A549 (cell line): ENCODE measurements at regions of chr3 and their contacts with region 1.

Region 1: DNA sequence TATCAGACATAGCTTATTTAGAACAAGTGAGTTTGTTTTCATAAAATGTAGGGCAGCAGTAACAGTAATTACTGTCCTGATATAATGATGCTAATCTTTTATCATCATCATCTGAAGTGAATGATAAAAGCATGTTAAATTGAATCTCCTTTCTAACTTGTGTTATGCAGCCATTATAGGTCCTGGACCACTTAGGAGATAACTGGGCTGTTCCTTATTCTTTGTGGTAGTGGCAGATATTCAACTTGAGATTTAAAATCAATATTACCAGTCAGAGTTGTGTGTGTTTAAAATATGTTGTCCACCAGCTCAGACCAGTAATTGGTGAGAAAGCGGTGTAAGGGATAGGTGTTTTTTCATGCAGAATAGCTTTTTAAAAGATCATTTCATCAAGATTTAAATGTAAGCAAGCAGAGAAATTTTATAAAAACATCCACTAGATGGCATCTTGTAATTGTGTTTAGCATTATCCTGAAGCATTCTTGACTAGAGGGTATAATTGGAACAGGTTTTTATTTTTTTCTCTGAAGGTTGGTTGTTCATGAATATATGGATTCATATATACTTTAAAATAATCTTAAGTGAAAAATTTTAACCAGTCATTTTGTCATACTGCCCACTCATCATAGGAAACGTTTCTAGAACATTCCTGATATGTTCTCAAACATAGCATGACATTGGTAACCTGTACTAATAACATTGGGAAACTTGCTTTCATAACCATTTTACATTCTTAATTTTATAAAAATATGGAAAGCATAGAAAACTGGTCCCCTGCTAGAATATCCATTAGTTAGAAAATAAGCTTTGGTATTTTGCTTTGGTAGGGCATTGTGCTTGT is 153.9 kb downstream of the BBX start:
- DNase-seq: peak in 1 of 2 experiments; percentile 16
- ATAC-seq: peak; percentile 54 to 78; a peak in 5 of 6 replicates
- H3K4me3 ChIP-seq: no peak overlapping the region
- H3K27ac ChIP-seq: no peak overlapping the region
- H3K4me1 ChIP-seq: no peaks in the 10 kb centered on the region
- CTCF ChIP-seq: peak; percentile 69
- EP300 ChIP-seq: no peak
- POLR2A ChIP-seq: no peak
- RAD21 ChIP-seq: peak; percentile 54 to 65; a peak in 4 of 5 replicates

Region 2: GRCh38 chr3:107660306-107660976 is 16.2 kb before region 1 on chr3:
- CTCF ChIA-PET with region 1: interaction called, 48 read pairs
- POLR2A ChIA-PET with region 1: no interaction called
- DNase-seq: peak in 1 of 2 experiments; percentile 50
- ATAC-seq: no peak
- H3K4me3 ChIP-seq: no peak overlapping the region
- H3K27ac ChIP-seq: no peak overlapping the region
- H3K4me1 ChIP-seq: peaks cover 11% of the 10 kb centered on the region
- CTCF ChIP-seq: peak; percentile 73
- EP300 ChIP-seq: no peak
- POLR2A ChIP-seq: no peak
- RAD21 ChIP-seq: peak; percentile 36 to 46

Region 3: DNA sequence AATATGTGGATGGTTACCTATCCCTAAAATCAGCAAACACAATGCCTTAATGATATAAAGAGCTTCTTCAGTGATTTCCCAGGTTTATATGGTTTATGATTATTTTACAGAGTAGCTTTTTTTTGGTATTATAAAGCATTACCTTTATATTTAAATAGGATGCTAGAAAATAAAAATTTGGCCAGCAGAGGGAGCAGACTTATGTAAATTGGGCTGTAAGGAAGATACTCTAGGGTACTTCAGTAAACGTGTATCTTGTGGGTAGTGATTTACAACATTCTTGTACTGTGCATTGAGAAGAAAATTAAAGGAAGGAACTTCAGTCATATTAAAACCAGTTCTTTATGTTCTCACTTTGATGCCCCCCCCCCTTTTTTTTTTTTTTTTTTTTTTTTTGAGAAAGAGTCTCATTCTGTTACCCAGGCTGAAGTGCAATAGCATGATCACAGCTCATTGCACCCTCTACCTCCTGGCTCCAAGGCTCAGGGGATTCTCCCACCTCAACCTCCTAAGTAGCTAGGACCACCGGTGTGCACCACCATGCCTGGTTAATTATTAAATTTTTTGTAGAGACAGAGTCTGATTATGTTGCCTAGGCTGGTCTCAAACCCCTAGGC is 13.9 kb after region 1 on chr3:
- CTCF ChIA-PET with region 1: interaction called, 21 read pairs
- POLR2A ChIA-PET with region 1: no interaction called
- DNase-seq: peak; percentile 30 to 67
- ATAC-seq: peak; percentile 73 to 83; a peak in 5 of 6 replicates
- H3K4me3 ChIP-seq: no peak overlapping the region
- H3K27ac ChIP-seq: no peak overlapping the region
- H3K4me1 ChIP-seq: peaks cover 14% of the 10 kb centered on the region; the same call in 2 of the 3 replicates
- CTCF ChIP-seq: peak; percentile 60
- EP300 ChIP-seq: no peak
- POLR2A ChIP-seq: no peak
- RAD21 ChIP-seq: peak in 1 of 2 experiments; percentile 34; a peak in 2 of 5 replicates

Region 4: GRCh38 chr3:107727102-107727501 is 50.4 kb after region 1 on chr3:
- CTCF ChIA-PET with region 1: interaction called, 13 read pairs
- POLR2A ChIA-PET with region 1: no interaction called
- DNase-seq: no peak
- ATAC-seq: no peak
- H3K4me3 ChIP-seq: no peak overlapping the region
- H3K27ac ChIP-seq: no peak overlapping the region
- H3K4me1 ChIP-seq: no peaks in the 10 kb centered on the region
- CTCF ChIP-seq: no peak
- EP300 ChIP-seq: no peak
- POLR2A ChIP-seq: no peak
- RAD21 ChIP-seq: no peak

Region 5: DNA sequence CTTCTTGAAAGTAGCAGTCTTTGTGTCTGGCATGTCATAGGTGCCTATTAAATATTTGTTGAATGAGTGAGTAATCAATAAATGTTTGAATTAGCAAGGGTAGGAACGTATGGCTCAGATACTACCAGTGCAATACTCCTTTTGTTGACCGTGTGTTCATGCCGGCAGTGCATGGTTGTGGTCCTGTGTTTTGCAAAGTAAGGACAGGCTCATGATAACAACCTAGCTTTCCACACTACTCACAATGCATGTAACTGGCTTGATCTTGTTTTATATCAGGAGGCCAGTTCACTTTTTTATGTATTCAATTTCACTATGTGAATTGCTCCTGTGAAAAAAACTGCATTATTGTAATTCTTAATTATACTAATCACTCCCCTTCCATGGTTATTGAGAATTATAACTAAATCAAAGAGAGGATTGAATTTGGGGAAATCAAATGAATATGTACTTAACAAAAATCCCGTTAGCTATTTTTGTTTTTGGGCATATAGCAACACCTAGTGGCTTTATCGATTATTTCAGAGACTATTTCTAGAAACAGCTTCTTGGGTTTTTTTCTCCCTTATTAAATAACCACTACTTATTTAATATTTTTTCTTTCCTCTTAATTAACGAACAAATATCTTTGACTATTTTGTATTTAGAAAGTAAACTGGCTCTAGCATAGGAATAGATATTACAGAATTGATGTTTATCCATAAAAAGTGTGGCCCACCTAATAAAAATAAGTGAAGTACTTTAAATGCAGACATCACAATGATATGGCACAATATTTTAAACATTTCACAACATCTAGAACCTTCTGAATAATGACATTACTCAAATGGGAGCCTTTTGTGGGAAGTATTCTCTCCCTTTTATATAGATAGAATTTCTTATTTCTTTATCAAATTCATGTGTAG is 64.6 kb after region 1 on chr3:
- CTCF ChIA-PET with region 1: interaction called, 47 read pairs
- POLR2A ChIA-PET with region 1: no interaction called
- DNase-seq: peak in 1 of 2 experiments; percentile 23
- ATAC-seq: no peak; a peak in 1 of 6 replicates
- H3K4me3 ChIP-seq: no peak overlapping the region
- H3K27ac ChIP-seq: no peak overlapping the region
- H3K4me1 ChIP-seq: no peaks in the 10 kb centered on the region
- CTCF ChIP-seq: peak; percentile 73
- EP300 ChIP-seq: no peak
- POLR2A ChIP-seq: no peak
- RAD21 ChIP-seq: peak; percentile 64 to 76

Region 6: DNA sequence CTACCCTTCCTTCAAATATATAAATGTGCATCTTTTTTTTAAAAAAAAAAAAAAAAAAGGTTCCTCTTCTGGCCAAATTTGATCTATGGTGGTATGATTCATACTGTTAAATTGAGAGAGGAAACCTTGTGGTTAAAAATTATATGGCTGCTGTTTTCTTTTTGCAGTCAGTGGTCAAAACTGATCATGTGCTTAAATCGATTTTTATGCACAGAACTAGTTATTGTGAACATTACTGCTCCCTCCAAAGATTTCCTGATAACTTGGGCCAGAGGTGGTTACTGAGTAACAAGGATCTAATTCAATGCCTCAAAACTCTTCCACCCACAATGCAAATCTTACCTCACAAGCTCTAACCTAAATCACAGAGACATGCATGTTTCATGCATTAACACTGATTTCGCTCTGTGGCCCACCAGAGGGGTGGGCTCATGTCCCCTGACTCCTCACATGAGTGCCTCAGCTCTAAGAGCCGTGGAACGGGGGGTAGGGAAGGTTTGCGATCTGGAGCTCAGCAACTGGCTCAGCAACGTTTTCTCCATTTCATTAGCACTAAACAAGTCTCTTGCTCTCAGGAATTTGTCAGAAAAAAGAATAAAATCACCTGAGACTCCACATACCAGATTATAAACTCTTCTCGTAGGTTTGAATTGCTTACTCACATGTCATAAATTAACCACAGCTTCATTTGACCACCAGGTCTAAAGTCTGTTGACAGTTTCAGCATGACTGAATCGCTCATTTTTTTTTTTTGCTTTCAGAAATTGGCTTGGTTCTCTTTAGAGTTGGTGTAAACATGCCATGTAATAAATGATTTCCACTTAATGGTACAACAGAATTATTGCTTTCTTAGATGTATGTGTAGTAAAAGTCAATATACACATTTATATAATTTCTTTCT is 133.7 kb after region 1 on chr3:
- CTCF ChIA-PET with region 1: no interaction called
- POLR2A ChIA-PET with region 1: no interaction called
- DNase-seq: no peak
- ATAC-seq: no peak
- H3K4me3 ChIP-seq: no peak overlapping the region
- H3K27ac ChIP-seq: no peak overlapping the region
- H3K4me1 ChIP-seq: no peaks in the 10 kb centered on the region
- CTCF ChIP-seq: no peak
- EP300 ChIP-seq: no peak
- POLR2A ChIP-seq: no peak
- RAD21 ChIP-seq: no peak